ENCODE measurements at regions of chr5 and their contacts with region 1.

Region 1: DNA sequence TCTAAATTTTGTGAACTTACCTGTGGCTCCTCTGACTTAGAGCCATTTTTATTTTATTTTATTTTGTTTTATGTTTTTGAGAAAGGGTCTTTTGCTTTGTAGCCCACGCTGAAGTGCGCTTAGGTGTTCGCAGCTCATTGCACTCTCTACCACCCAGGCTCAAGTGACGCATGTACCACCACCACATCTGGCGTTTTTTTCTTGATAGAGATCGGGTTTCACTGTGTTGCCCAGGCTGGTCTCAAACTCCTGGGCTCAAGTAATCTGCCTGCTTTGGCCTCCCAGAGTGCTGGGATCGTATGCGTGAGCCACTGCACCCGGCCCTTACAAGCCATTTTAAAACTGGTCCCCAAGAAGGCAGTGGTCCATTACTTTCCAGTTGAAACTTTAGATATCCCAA is 18.5 kb downstream of the MATR3 start:
- DNase-seq: no peak
- ATAC-seq: no peak
- H3K4me3 ChIP-seq: no peak overlapping the region
- H3K4me3 Mint-ChIP-seq: no peak overlapping the region
- H3K27ac ChIP-seq: no peak overlapping the region
- H3K27ac Mint-ChIP-seq: no peak overlapping the region
- H3K4me1 ChIP-seq: peaks cover 14 to 41% of the 10 kb centered on the region in 2 donors
- H3K4me1 Mint-ChIP-seq: peaks cover 53% of the 10 kb centered on the region
- H3K27me3 ChIP-seq: no peaks in the 10 kb centered on the region
- H3K27me3 Mint-ChIP-seq: no peaks in the 10 kb centered on the region
- CTCF ChIP-seq: no peak

Region 2: GRCh38 chr5:140113699-140114263 is 801.7 kb after region 1 on chr5 and contains the start of gene PURA:
- CTCF ChIA-PET with region 1: no interaction called
- POLR2A ChIA-PET with region 1: interaction called, 10 read pairs
- intact Hi-C with region 1: no loop called
- DNase-seq: peak; percentile 96
- ATAC-seq: peak; percentile 91
- H3K4me3 ChIP-seq: peak within 1 kb of the TSS; percentile 49 to 82 (median 78)
- H3K4me3 Mint-ChIP-seq: peak within 1 kb of the TSS; percentile 98
- H3K27ac ChIP-seq: peak within 1 kb of the TSS; percentile 72 to 87
- H3K27ac Mint-ChIP-seq: peak within 1 kb of the TSS; percentile 99
- H3K4me1 ChIP-seq: peaks cover 40 to 58% of the 10 kb centered on the region in 2 donors
- H3K4me1 Mint-ChIP-seq: peaks cover 71% of the 10 kb centered on the region
- H3K27me3 ChIP-seq: peaks cover 5 to 19% (median 11%) of the 10 kb centered on the region in 4 experiments
- H3K27me3 Mint-ChIP-seq: peaks cover 11% of the 10 kb centered on the region
- CTCF ChIP-seq: peak; percentile 17
- total RNA-seq, gene PURA: 23.5 and 26.0 TPM in 2 replicates